Activated CD8-positive, alpha-beta T cell treated with anti-CD3 and anti-CD28 coated beads, Interleukin-2, amount 10 ng/mL, durations not matched to agents 7 days and 5 days (primary cell): ENCODE measurements at regions of chr9 and their contacts with region 1.

Region 1: GRCh38 chr9:124886866-124887492 is 25.0 kb downstream of the ARPC5L start:
- DNase-seq: no peak
- ATAC-seq: no peak
- H3K4me3 Mint-ChIP-seq: no peak overlapping the region
- H3K27ac Mint-ChIP-seq: no peak overlapping the region
- H3K4me1 Mint-ChIP-seq: no peaks in the 10 kb centered on the region
- H3K27me3 Mint-ChIP-seq: no peaks in the 10 kb centered on the region

Region 2: GRCh38 chr9:124342776-124343485 is 544.0 kb before region 1 on chr9:
- CTCF ChIA-PET with region 1: no interaction called
- POLR2A ChIA-PET with region 1: no interaction called
- DNase-seq: no peak
- ATAC-seq: no peak
- H3K4me3 Mint-ChIP-seq: no peak overlapping the region
- H3K27ac Mint-ChIP-seq: no peak overlapping the region
- H3K4me1 Mint-ChIP-seq: no peaks in the 10 kb centered on the region
- H3K27me3 Mint-ChIP-seq: no peaks in the 10 kb centered on the region

Region 3: DNA sequence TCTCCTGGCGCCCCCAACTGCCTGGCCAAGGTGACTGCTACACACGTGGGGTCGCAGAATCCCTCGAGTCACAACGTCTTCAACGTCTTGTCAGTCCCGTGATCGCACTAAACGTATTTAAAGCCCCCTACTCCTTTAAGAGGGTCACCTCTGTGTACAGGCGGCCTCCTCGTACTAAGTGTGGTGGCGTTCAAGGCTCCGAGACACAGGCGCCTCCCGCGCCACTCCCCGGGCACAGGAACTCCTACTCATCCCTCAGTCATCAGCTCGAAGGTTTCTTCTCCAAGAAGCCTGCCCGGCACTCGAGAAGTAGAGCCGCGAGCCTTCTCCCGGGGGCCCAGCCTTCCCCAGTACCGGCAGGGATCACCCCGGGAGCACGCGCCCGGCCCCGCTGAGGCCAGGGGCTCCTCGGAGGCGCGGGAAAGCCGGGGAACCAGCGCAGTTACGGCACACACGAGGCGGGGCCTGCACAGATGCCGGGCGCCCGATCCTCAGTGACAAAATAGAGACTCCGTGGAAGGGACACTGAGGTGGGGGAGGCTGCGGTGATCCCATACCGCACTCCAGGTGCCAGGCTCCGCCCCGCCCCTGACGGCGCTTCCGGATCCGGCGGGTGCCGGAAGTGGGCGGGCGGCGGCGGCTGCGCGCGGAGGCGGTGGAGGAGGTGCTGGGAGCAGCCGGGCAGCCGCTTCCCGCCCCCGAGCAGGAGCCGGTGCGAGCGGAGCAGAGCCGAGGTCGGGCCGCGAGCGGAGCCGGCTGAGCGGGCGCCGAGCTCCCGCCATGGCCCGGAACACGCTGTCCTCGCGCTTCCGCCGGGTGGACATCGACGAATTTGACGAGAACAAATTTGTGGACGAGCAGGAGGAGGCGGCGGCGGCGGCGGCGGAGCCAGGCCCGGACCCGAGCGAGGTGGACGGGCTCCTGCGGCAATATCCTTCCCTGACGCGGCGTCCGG is 18.2 kb before region 1 on chr9:
- CTCF ChIA-PET with region 1: no interaction called
- POLR2A ChIA-PET with region 1: interaction called, 10 read pairs
- DNase-seq: peak; percentile 93
- ATAC-seq: peak; percentile 83
- H3K4me3 Mint-ChIP-seq: peak overlapping the region; percentile 89
- H3K27ac Mint-ChIP-seq: peak overlapping the region; percentile 99
- H3K4me1 Mint-ChIP-seq: peaks cover 51% of the 10 kb centered on the region
- H3K27me3 Mint-ChIP-seq: no peaks in the 10 kb centered on the region